Posterior vena cava (tissue), 2 donors: ENCODE measurements at regions of chrX and their contacts with region 1.

Region 1: DNA sequence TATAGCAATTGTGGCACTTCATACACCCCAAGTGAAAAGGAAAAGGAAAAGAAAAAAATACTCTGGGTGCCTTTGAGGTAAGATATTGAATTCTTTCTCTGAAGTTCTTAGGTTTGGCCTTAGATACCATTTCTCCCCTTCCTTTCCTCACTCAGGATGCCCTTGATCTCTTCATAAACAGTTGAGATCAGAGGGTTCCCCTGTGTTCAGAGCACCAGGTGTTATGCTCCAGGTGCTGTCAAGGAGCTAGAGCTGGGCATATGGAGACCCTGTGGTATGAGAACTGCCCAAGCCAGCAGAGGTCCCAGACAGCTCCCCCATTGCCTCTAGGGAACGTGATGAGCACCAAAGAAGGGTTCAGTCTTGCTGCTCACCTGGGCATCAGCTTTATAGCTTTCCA is 17.1 kb upstream of the CD40LG start:
- DNase-seq: no peak

Region 2: GRCh38 chrX:135505351-135505750 is 1125.5 kb before region 1 on chrX:
- intact Hi-C with region 1: loop called in 1 of 2 experiments (anchors 5 kb)
- DNase-seq: no peak

Region 3: GRCh38 chrX:136658151-136658550 is 27.3 kb after region 1 on chrX:
- intact Hi-C with region 1: no loop called
- DNase-seq: no peak